A549 (cell line): ENCODE measurements at regions of chr3 and their contacts with region 1.

Region 1: GRCh38 chr3:69320871-69321271 is 65.0 kb downstream of the FRMD4B start:
- DNase-seq: no peak
- ATAC-seq: no peak
- H3K4me3 ChIP-seq: no peak overlapping the region
- H3K27ac ChIP-seq: no peak overlapping the region
- H3K4me1 ChIP-seq: no peaks in the 10 kb centered on the region
- CTCF ChIP-seq: no peak
- EP300 ChIP-seq: no peak
- POLR2A ChIP-seq: no peak
- RAD21 ChIP-seq: no peak

Region 2: DNA sequence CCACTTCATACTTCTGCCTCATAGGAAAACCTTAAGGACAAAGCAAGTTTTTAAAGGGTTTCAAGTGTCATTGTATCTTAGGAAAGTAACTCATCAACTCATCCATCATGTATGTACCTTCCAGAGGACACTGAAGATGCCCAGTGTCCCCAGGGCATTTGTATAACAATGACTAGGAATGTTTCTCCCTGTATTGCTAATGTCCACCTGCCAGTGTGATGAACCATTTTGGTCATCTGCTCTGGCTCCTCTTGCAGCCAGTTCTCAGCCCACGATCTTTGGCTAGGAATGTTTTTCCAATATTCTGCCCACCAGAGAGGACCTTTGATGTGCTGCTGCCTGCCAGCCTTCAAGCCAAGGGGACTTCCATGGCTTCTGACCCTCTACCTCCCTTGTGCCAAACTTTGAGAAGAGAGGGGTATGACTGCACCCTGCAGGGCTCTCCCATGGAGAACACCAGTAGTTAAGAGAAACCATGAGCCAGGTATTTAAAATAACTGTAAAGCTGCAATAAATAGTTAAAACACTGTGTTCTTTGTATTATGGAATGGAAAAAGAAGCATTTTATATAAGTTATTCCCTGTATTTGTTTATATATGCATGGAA is 209.8 kb before region 1 on chr3:
- CTCF ChIA-PET with region 1: no interaction called
- POLR2A ChIA-PET with region 1: interaction called, 12 read pairs
- DNase-seq: no peak
- ATAC-seq: no peak
- H3K4me3 ChIP-seq: no peak overlapping the region
- H3K27ac ChIP-seq: no peak overlapping the region
- H3K4me1 ChIP-seq: no peaks in the 10 kb centered on the region
- CTCF ChIP-seq: no peak
- EP300 ChIP-seq: no peak
- POLR2A ChIP-seq: no peak
- RAD21 ChIP-seq: no peak